ENCODE measurements at regions of chr5 and their contacts with region 1.

Region 1: DNA sequence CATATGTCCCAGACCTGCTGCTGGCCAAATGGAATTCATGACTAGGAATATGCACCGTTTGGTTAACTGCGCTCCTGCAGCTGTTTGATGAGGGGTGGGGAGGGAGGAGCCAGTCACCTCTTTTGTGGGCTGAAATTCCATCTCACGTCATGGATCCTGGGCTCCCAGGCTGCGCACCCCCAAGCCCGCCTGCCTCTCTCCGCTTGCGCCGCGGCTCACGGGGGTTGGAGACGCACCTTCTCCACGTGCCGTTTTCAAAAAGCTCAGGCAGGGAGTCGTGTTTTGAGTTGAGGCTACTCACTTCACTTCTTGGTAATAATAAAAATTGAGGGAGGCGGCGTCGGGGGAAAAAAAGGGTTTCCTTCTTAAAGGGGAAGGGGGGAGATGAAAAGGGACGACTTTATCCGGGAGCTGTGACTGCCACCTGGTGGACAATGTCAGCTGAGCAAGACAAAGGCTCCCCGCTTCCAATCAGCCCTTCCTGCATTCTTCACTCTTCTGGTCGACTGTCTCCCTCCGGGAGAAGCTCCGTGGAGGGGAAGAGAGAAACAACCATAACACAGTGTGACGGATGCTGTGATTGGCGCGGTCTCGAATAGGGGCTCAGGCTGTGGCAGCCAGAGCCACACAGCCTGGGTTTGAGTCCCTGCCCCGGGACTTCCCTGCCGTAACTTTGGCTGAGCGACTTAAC is 15.9 kb upstream of the C5orf47 start:
- DNase-seq: peak; percentile 90

Region 2: GRCh38 chr5:173643963-173644362 is 329.1 kb before region 1 on chr5:
- in situ Hi-C with region 1: loop called (anchors 25 kb)
- DNase-seq: no peak

Measured in KBM-7 (cell line).